Posterior cingulate gyrus (tissue), 11 donors: ENCODE measurements at regions of chr6 and their contacts with region 1.

Region 1: DNA sequence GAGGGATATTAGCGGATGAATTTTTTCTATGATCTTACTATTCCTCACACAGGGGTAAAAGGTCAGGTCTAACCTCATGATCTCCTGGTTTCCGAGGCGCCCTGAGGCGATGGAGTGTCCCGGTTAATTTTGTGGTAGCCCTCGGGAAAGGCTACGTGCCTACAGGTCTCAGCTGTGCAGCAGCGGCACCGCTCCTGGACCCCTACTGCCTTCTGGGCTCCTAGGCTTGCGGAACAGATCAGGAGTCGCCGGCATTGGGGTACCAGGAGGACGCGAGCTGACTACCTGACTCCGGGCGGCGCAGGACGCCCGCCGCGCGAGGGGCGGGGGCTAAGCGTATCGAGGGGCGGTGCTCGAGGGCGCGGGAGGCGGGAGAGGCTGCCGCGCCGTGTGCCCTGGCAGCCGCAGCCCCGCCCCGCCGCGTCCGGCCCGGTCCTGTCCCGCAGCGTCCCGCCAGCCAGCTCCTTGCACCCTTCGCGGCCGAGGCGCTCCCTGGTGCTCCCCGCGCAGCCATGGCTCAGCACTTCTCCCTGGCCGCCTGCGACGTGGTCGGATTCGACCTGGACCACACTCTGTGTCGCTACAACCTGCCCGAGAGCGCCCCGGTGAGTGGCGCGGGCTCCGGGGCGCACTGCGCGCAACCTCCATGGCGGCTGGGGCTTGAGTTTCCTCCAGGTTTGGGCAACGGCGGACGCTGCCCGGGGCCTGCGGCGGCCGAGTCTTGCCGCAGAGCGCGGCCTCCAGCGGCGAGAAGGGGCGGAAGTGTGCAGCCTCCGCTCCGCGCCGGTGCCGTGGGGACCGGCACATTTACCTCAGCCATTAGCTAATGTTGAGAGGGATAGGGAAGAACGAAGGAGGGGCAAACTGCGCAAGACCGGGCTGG is at the start of gene NT5DC1:
- DNase-seq: peak; percentile 67 to 97 (median 81)

Region 2: DNA sequence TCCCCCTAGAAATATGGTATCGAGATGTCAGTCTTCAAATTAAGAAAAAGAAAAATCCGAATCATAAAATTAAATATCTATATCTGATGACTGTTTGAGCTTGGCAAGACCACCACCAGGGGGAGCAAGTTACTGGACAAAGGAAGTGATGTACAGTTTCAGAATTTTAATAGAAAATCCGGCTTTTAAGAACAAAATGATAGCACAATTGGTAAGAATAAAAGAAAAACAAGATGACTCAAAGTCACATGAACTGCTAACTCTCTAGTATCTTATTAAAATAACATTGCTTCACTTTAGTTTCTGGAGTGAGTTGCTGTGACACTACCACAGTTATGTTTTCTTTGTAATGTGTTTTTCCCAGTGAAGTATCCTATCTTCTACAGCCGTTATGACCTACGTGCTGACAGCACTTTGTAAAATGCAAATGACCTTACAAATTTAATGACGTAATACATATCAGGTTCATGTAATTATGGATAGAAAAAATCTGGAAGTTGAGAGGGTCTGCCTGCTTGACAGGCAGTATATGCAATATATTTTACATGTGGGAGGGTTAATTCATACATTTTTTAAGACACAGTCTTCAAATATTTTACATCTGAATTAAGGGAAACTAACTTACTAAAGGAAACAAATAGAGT is 1352.6 kb before region 1 on chr6:
- intact Hi-C with region 1: loop called (anchors 5 kb)
- DNase-seq: peak in 6 of 10 donors; percentile 34 to 75 (median 57)

Region 3: GRCh38 chr6:115969930-115970273 is 130.8 kb before region 1 on chr6:
- intact Hi-C with region 1: loop called (anchors 5 kb)
- DNase-seq: no peak

Region 4: DNA sequence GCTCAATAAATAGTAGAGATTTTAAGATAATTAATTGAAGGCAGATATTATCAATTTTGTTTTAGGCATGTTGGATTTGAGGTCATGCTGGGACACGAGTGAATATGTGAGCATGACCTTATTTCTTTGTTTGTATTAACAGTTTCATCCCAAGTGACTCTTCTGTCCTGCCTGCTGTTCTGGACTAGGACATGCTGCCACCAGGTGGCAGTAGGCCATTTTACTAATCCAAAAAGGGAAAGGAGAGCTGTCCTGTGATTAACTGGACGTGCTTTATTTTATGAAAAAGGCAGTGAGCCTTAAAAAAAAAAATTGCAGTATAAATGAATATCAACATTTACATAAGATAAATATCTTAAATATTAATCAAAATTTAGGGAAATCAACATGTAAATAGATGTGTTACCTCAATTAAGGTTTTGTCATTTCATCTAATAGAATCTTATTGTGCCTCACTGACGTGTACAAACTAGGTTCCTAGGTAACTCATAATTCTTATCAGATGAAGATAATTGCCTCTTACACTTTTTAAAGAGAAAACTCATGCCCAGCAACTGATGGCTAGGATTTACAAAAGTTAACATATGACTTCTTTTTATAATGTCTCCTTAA is 89.8 kb before region 1 on chr6:
- intact Hi-C with region 1: loop called (anchors 2 kb)
- DNase-seq: peak; percentile 33 to 95 (median 74)

Region 5: DNA sequence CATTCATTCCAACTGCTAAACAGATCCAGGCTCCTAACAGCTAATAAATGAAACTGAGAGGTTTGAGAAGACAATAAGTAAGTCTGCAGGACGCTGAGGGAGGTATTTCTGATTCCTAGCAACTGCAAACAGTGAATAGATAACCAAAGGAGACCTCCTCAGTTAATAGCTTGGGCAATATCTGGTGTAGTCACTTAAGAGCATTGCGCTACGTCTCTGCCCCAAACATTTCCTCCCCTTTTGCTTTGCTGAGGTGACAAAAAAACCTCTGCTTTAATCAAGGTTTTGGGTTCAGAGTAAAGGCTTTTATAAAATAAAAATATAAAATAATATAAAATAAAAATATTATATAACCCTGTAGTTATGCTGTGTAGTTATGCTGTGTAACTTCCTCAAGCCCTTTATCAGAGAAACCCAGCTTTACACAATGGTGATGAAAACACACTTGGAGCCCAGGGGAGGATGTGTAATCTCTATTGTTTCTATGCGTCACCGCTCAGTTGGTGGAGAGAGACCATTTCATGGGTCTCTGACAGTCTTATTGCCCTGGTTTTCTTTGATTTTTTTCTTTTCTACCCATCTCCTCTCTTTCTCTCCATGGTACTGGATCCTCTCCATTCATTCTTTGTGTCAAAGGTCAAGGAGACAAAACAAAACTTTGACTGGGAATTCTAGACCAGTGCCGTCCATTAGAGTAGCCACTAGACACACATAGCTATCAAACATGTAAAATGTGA is 391.8 kb after region 1 on chr6:
- intact Hi-C with region 1: no loop called
- DNase-seq: no peak